ENCODE measurements at regions of chr15 and their contacts with region 1.

Region 1: DNA sequence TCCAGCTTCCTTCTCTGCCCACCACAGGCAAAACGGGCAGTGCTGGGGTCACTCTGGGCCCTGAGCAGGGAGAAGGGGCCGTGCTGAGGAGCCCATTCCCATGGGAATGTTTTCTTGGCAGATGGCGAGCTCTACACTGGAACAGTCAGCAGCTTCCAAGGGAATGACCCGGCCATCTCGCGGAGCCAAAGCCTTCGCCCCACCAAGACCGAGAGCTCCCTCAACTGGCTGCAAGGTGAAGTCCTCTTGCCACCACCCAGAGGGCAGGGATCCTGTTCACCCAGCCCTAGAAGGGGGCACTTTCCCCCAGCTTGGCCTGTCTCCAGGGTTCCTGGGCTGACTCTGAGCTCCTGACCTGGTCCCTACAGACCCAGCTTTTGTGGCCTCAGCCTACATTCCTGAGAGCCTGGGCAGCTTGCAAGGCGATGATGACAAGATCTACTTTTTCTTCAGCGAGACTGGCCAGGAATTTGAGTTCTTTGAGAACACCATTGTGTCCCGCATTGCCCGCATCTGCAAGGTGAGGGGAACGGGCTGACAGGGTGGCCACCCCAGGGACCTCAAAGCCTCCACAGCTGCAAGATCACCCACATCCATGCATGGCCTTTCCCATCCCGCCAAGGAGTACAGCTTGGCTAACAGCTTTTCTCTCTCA is 12.4 kb downstream of the CIB1 start:
- DNase-seq: peak; percentile 53 to 84 (median 78)
- H3K4me3 ChIP-seq: no peak overlapping the region
- H3K27ac ChIP-seq: peak overlapping the region in 51 of 59 donors; percentile 14 to 81 (median 57)
- H3K27me3 ChIP-seq: no peaks in the 10 kb centered on the region
- CTCF ChIP-seq: peak; percentile 24 to 90 (median 77)

Region 2: GRCh38 chr15:88246666-88247446 is 1974.5 kb before region 1 on chr15:
- intact Hi-C with region 1: no loop called
- DNase-seq: peak; percentile 66 to 88 (median 78)
- H3K4me3 ChIP-seq: peak overlapping the region in 54 of 59 donors; percentile 6 to 57 (median 38)
- H3K27ac ChIP-seq: peak overlapping the region in 21 of 59 donors; percentile 5 to 66 (median 46)
- H3K27me3 ChIP-seq: no peaks in the 10 kb centered on the region
- CTCF ChIP-seq: peak; percentile 89 to 99 (median 97)

Region 3: GRCh38 chr15:90184786-90185569 is 36.4 kb before region 1 on chr15:
- intact Hi-C with region 1: loop called in 1 of 2 experiments (anchors 5 kb)
- DNase-seq: peak; percentile 60 to 88 (median 78)
- H3K4me3 ChIP-seq: peak overlapping the region; percentile 50 to 94 (median 84)
- H3K27ac ChIP-seq: peak overlapping the region; percentile 79 to 99 (median 95)
- H3K27me3 ChIP-seq: no peaks in the 10 kb centered on the region
- CTCF ChIP-seq: peak in 23 of 56 donors; percentile 2 to 48 (median 19)

Region 4: GRCh38 chr15:90249203-90249863 is 28.0 kb after region 1 on chr15 and contains the start of gene TTLL13:
- intact Hi-C with region 1: no loop called
- DNase-seq: peak; percentile 79 to 94 (median 91)
- H3K4me3 ChIP-seq: peak within 1 kb of the TSS; percentile 46 to 89 (median 67)
- H3K27ac ChIP-seq: peak within 1 kb of the TSS in 41 of 59 donors; percentile 3 to 81 (median 53)
- H3K27me3 ChIP-seq: no peaks in the 10 kb centered on the region
- CTCF ChIP-seq: peak in 4 of 56 donors; percentile 10 to 17 (median 12)
- total RNA-seq, gene TTLL13: 0.14 to 3.2 (median 1.1) TPM in 107 of 120 experiments, not detected in the others